ENCODE measurements at regions of chr11 and their contacts with region 1.

Region 1: GRCh38 chr11:66081505-66081904 is 11.4 kb downstream of the PACS1 start:
- DNase-seq: peak; percentile 38 to 91 (median 86)
- ATAC-seq: peak; percentile 98
- H3K4me3 ChIP-seq: peak overlapping the region; percentile 38
- H3K4me3 Mint-ChIP-seq: peak overlapping the region; percentile 61 to 95 (median 89)
- H3K27ac ChIP-seq: peak overlapping the region; percentile 80
- H3K27ac Mint-ChIP-seq: peak overlapping the region; percentile 93 to 100 (median 98)
- H3K4me1 ChIP-seq: peaks cover 56 to 77% of the 10 kb centered on the region in 2 donors
- H3K4me1 Mint-ChIP-seq: peaks cover 62 to 98% (median 86%) of the 10 kb centered on the region in 7 donors
- H3K27me3 ChIP-seq: no peaks in the 10 kb centered on the region
- H3K27me3 Mint-ChIP-seq: no peaks in the 10 kb centered on the region

Region 2: DNA sequence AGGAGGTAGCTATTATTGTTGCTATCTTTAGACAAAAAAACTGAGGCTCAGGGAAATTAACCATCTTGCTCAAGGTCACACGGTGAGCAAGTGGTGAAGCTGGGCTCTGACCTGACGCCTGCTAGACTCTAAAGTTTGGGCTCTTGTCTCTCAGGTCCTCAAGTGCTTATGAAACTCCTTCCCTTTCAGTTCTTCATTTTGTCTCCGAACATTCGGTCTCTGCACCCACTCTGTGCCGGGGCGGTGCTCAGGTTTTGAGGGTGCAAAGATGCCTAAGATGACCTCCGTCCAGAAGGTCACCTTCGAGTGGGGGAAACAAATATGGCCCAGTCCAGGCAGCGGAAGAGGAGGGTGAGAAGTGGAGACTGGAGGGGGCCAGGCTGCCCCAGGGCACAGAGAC is 278.7 kb before region 1 on chr11:
- CTCF ChIA-PET with region 1: no interaction called
- POLR2A ChIA-PET with region 1: no interaction called
- intact Hi-C with region 1: no loop called
- DNase-seq: no peak
- ATAC-seq: no peak
- H3K4me3 ChIP-seq: no peak overlapping the region
- H3K4me3 Mint-ChIP-seq: no peak overlapping the region
- H3K27ac ChIP-seq: no peak overlapping the region
- H3K27ac Mint-ChIP-seq: no peak overlapping the region
- H3K4me1 ChIP-seq: no peaks in the 10 kb centered on the region
- H3K4me1 Mint-ChIP-seq: peaks cover 0 to 6% (median 0%) of the 10 kb centered on the region in 7 donors
- H3K27me3 ChIP-seq: peaks cover 3 to 9% of the 10 kb centered on the region in 2 donors
- H3K27me3 Mint-ChIP-seq: peaks cover 14 to 40% (median 37%) of the 10 kb centered on the region in 5 donors

Region 3: GRCh38 chr11:65817835-65818742 is 263.4 kb before region 1 on chr11:
- CTCF ChIA-PET with region 1: no interaction called
- POLR2A ChIA-PET with region 1: no interaction called
- intact Hi-C with region 1: no loop called
- DNase-seq: peak; percentile 79 to 98 (median 89)
- ATAC-seq: peak; percentile 98
- H3K4me3 ChIP-seq: peak overlapping the region; percentile 72
- H3K4me3 Mint-ChIP-seq: peak overlapping the region; percentile 74 to 90 (median 82)
- H3K27ac ChIP-seq: peak overlapping the region; percentile 75
- H3K27ac Mint-ChIP-seq: peak overlapping the region; percentile 56 to 90 (median 76)
- H3K4me1 ChIP-seq: peaks cover 7% of the 10 kb centered on the region in 2 donors
- H3K4me1 Mint-ChIP-seq: peaks cover 6 to 21% (median 17%) of the 10 kb centered on the region in 7 donors
- H3K27me3 ChIP-seq: no peaks in the 10 kb centered on the region
- H3K27me3 Mint-ChIP-seq: peaks cover 0 to 4% (median 0%) of the 10 kb centered on the region in 5 donors

Region 4: DNA sequence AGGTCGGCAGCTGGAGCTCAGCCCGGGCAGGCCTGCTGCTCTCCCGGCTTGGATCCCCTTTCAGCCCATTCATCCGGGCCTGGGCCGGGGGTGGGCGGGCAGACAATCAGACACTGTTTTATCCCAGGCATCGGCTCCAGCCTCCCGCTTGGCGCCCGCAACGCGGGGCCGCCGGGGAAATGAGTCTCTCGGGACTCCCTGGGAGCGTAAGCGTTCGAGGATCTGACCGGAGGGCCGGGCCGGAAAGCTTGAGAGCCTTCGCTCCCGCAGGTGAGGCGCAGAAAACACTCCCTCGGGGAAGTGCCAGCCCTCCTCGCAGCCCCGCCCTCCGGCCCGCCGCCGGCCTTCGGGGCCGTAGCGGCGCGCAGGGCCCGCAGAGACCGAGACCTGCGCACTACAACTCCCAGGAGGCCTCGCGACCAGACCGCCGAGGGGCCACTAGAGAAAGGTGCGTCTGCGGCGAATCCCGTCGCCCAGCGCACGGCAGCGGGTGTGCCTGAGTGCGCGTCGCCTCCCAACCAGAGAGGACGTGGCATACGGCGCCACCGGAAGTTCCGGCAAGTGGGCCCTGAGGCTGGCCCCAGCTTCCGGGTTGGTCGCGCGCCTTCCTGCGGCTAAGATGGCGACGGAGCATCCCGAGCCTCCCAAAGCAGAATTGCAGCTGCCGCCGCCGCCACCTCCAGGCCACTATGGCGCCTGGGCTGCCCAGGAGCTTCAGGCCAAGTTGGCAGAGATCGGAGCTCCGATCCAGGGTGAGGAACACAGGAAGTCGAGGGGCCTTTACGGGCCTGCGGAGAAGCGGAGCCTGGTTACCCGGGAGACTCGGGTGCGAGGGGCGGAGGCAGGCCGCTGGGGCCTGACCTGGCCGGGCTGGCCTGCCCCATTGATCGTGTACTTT is 29.5 kb before region 1 on chr11 and contains the start of gene SF3B2:
- CTCF ChIA-PET with region 1: interaction called, 3 read pairs
- POLR2A ChIA-PET with region 1: interaction called, 20 read pairs
- intact Hi-C with region 1: no loop called
- DNase-seq: peak; percentile 81 to 94 (median 93)
- ATAC-seq: peak; percentile 99
- H3K4me3 ChIP-seq: peak within 1 kb of the TSS; percentile 88
- H3K4me3 Mint-ChIP-seq: peak within 1 kb of the TSS; percentile 95 to 100 (median 98)
- H3K27ac ChIP-seq: peak within 1 kb of the TSS; percentile 93
- H3K27ac Mint-ChIP-seq: peak within 1 kb of the TSS; percentile 95 to 99 (median 98)
- H3K4me1 ChIP-seq: peaks cover 14 to 18% of the 10 kb centered on the region in 2 donors
- H3K4me1 Mint-ChIP-seq: peaks cover 17 to 44% (median 38%) of the 10 kb centered on the region in 7 donors
- H3K27me3 ChIP-seq: no peaks in the 10 kb centered on the region
- H3K27me3 Mint-ChIP-seq: peaks cover 0 to 9% (median 0%) of the 10 kb centered on the region in 5 donors
- total RNA-seq, gene SF3B2: 163 to 248 (median 206) TPM

Region 5: DNA sequence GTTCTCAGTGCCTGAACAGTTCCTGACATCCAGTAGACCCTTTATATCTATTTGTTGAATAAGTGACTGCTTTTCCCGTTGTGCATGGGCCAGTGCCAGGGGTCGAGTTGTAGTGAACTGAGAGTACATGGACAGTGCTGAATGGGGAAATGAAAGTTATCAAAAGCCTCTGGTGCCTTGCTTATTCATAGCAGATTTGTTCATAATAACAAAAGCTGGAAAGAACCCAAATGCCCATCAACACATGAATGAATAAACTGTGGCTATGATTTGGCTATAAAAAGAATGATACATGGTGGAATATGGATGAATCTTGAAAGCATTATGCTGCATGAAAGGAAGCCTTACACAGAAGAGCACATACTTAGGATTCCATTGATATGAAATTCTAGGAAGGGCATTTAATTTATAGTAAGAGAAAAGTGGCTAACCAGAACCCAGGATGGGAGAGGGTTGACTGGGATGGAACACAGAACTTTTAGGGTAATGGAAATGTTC is 31.1 kb after region 1 on chr11:
- CTCF ChIA-PET with region 1: interaction called, 12 read pairs
- POLR2A ChIA-PET with region 1: interaction called, 34 read pairs
- intact Hi-C with region 1: loop called (anchors 2 kb)
- DNase-seq: no peak
- ATAC-seq: peak; percentile 22
- H3K4me3 ChIP-seq: no peak overlapping the region
- H3K4me3 Mint-ChIP-seq: peak overlapping the region; percentile 42 to 81 (median 70)
- H3K27ac ChIP-seq: peak overlapping the region; percentile 55
- H3K27ac Mint-ChIP-seq: peak overlapping the region; percentile 80 to 95 (median 90)
- H3K4me1 ChIP-seq: peaks cover 76 to 89% of the 10 kb centered on the region in 2 donors
- H3K4me1 Mint-ChIP-seq: peaks cover 74 to 100% (median 90%) of the 10 kb centered on the region in 7 donors
- H3K27me3 ChIP-seq: no peaks in the 10 kb centered on the region
- H3K27me3 Mint-ChIP-seq: no peaks in the 10 kb centered on the region

Region 6: GRCh38 chr11:66119348-66120133 is 38.0 kb after region 1 on chr11:
- CTCF ChIA-PET with region 1: interaction called, 12 read pairs
- POLR2A ChIA-PET with region 1: interaction called, 34 read pairs
- intact Hi-C with region 1: loop called (anchors 2 kb)
- DNase-seq: no peak
- ATAC-seq: no peak
- H3K4me3 ChIP-seq: no peak overlapping the region
- H3K4me3 Mint-ChIP-seq: peak overlapping the region in 7 of 10 donors; percentile 10 to 81 (median 60)
- H3K27ac ChIP-seq: peak overlapping the region; percentile 32
- H3K27ac Mint-ChIP-seq: peak overlapping the region in 8 of 9 donors; percentile 53 to 90 (median 80)
- H3K4me1 ChIP-seq: peaks cover 51 to 79% of the 10 kb centered on the region in 2 donors
- H3K4me1 Mint-ChIP-seq: peaks cover 63 to 94% (median 88%) of the 10 kb centered on the region in 7 donors
- H3K27me3 ChIP-seq: no peaks in the 10 kb centered on the region
- H3K27me3 Mint-ChIP-seq: no peaks in the 10 kb centered on the region

Region 7: GRCh38 chr11:66126808-66127555 is 45.5 kb after region 1 on chr11:
- CTCF ChIA-PET with region 1: no interaction called
- POLR2A ChIA-PET with region 1: interaction called, 31 read pairs
- intact Hi-C with region 1: loop called in 1 of 2 experiments (anchors 1 kb)
- DNase-seq: peak in 8 of 9 donors; percentile 45 to 74 (median 65)
- ATAC-seq: peak; percentile 95
- H3K4me3 ChIP-seq: peak overlapping the region; percentile 36
- H3K4me3 Mint-ChIP-seq: peak overlapping the region; percentile 60 to 88 (median 83)
- H3K27ac ChIP-seq: peak overlapping the region; percentile 74
- H3K27ac Mint-ChIP-seq: peak overlapping the region; percentile 82 to 100 (median 97)
- H3K4me1 ChIP-seq: peaks cover 20 to 65% of the 10 kb centered on the region in 2 donors
- H3K4me1 Mint-ChIP-seq: peaks cover 53 to 89% (median 84%) of the 10 kb centered on the region in 7 donors
- H3K27me3 ChIP-seq: no peaks in the 10 kb centered on the region
- H3K27me3 Mint-ChIP-seq: no peaks in the 10 kb centered on the region

Region 8: GRCh38 chr11:66136752-66137123 is 55.2 kb after region 1 on chr11:
- CTCF ChIA-PET with region 1: interaction called, 6 read pairs
- POLR2A ChIA-PET with region 1: interaction called, 6 read pairs
- intact Hi-C with region 1: loop called in 1 of 2 experiments (anchors 1 kb)
- DNase-seq: no peak
- ATAC-seq: no peak
- H3K4me3 ChIP-seq: no peak overlapping the region
- H3K4me3 Mint-ChIP-seq: no peak overlapping the region
- H3K27ac ChIP-seq: no peak overlapping the region
- H3K27ac Mint-ChIP-seq: peak overlapping the region in 5 of 9 donors; percentile 6 to 75 (median 23)
- H3K4me1 ChIP-seq: peaks cover 0 to 4% of the 10 kb centered on the region in 2 donors
- H3K4me1 Mint-ChIP-seq: peaks cover 24 to 76% (median 65%) of the 10 kb centered on the region in 7 donors
- H3K27me3 ChIP-seq: no peaks in the 10 kb centered on the region
- H3K27me3 Mint-ChIP-seq: no peaks in the 10 kb centered on the region

Region 9: DNA sequence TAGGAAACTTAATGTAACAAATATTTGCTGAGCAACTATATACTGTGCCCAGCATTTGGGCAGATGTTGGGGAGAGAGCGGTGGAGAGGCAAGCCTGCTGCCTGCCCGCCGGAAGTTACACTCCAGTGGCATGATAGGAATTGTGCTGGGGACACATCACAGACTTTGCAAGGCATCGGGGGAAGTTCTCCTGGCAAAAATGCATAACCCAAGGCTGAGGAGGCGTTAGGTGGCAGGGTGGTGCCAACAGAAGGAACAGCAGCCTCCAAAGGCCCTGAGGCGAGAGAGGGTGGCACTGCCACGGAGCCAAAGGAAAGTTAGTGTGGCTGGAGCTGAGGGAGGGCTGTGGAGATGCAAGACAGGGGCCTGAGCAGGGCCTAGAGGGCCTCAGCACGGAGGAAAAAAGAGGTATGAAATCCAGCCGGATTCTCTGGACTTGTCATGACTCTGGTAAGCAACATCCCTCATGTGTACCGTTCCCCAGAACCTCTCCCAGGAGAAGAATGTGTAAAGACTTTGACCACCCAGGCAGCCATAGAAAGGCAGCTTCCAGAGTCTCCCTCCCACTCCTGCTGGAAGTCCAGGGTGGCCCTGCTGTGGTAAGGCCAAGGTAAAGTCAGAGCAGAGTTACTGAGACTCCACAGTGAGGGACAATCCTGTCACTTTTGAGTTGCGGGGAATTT is 110.8 kb after region 1 on chr11:
- CTCF ChIA-PET with region 1: no interaction called
- POLR2A ChIA-PET with region 1: no interaction called
- intact Hi-C with region 1: no loop called
- DNase-seq: no peak
- ATAC-seq: no peak
- H3K4me3 ChIP-seq: no peak overlapping the region
- H3K4me3 Mint-ChIP-seq: no peak overlapping the region
- H3K27ac ChIP-seq: no peak overlapping the region
- H3K27ac Mint-ChIP-seq: peak overlapping the region in 4 of 9 donors; percentile 19 to 82 (median 50)
- H3K4me1 ChIP-seq: no peaks in the 10 kb centered on the region
- H3K4me1 Mint-ChIP-seq: peaks cover 6 to 40% (median 27%) of the 10 kb centered on the region in 7 donors
- H3K27me3 ChIP-seq: no peaks in the 10 kb centered on the region
- H3K27me3 Mint-ChIP-seq: no peaks in the 10 kb centered on the region

Measured in naive thymus-derived CD4-positive, alpha-beta T cell (primary cell).